B cell (primary cell): ENCODE measurements at regions of chr15 and their contacts with region 1.

Region 1: DNA sequence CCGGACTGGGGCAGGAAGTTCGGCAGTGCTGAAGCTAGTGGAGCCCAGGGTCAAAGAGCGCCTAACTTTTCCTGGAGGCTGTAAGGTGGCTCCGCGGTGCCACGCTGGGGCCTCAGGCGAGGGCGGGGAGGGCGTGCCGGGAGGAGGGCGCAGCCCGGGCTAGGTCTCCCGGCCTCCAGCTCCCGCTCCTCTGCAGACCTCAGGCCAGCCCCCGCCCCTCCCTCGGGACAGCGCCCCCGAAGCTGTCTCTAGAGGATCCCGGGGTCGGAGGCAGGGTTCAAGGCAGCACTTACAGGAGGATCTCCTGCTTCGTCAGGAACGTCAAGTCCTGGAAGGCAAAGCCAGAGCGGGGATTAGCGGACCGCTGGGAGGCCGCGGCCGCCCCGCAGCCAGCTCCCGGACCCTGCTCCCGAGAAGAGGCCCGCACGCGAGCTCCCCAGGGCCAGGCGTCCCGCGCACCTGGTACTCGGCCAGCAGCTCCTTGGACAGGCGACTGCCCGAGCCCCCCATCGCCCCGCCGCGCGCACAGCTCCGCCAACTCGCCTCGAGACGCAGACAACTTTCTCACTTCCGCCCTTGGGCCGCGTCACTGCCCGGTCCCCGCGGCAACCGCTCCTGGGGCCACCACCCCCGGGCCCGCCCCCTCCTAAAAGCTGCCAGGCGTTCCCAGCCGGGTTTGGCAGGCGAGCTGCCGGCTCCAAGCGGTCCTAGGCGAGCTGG is at the start of gene CIB1:
- DNase-seq: no peak
- ATAC-seq: peak; percentile 87
- H3K4me3 ChIP-seq: peak within 1 kb of the TSS; percentile 85 to 99 (median 92)
- H3K4me3 Mint-ChIP-seq: peak within 1 kb of the TSS; percentile 97
- H3K27ac ChIP-seq: peak within 1 kb of the TSS; percentile 88 to 99
- H3K27ac Mint-ChIP-seq: peak within 1 kb of the TSS; percentile 97
- H3K4me1 ChIP-seq: peaks cover 40 to 50% of the 10 kb centered on the region in 2 donors
- H3K4me1 Mint-ChIP-seq: peaks cover 52% of the 10 kb centered on the region
- H3K27me3 ChIP-seq: no peaks in the 10 kb centered on the region
- H3K27me3 Mint-ChIP-seq: no peaks in the 10 kb centered on the region
- CTCF ChIP-seq: no peak
- total RNA-seq, gene CIB1: 139 and 153 TPM in 2 replicates

Region 2: DNA sequence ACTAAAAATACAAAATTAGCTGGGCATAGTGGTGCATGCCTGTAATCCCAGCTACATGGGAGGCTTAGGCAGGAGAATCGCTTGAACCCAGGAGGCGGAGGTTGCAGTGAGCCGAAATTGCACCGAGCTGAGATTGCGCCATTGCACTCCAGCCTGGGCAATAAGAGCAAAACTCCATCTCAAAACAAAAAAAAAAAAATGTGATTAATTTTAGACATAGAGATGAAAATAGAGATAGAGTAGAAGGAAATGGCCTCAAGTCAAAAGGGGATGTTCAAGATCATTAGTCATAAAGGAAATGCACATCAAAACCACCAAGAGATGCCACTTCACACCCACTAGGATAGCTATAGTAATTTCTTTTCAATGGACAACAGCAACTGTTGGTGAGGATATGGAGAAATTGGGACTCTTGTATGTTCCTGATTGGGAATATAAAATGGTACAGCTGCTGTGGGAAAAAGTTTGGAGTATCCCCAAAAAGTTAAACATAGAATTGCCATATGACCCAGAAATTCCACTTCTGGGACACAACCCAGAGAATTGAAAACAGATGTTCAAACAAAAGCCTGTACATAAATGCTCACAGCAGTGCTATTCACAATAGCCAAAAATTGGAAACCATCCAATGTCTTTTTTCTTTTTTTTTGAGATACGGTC is 1089.9 kb before region 1 on chr15:
- CTCF ChIA-PET with region 1: no interaction called
- POLR2A ChIA-PET with region 1: no interaction called
- intact Hi-C with region 1: no loop called
- DNase-seq: no peak
- ATAC-seq: no peak
- H3K4me3 ChIP-seq: no peak overlapping the region
- H3K4me3 Mint-ChIP-seq: no peak overlapping the region
- H3K27ac ChIP-seq: no peak overlapping the region
- H3K27ac Mint-ChIP-seq: no peak overlapping the region
- H3K4me1 ChIP-seq: no peaks in the 10 kb centered on the region
- H3K4me1 Mint-ChIP-seq: peaks cover 4% of the 10 kb centered on the region
- H3K27me3 ChIP-seq: no peaks in the 10 kb centered on the region
- H3K27me3 Mint-ChIP-seq: no peaks in the 10 kb centered on the region
- CTCF ChIP-seq: no peak

Region 3: GRCh38 chr15:90101969-90102890 is 131.3 kb before region 1 on chr15 and contains the start of gene IDH2:
- CTCF ChIA-PET with region 1: interaction called, 3 read pairs
- POLR2A ChIA-PET with region 1: no interaction called
- intact Hi-C with region 1: loop called (anchors 5 kb)
- DNase-seq: peak; percentile 84
- ATAC-seq: peak; percentile 88
- H3K4me3 ChIP-seq: peak within 1 kb of the TSS; percentile 39 to 76 (median 73)
- H3K4me3 Mint-ChIP-seq: peak within 1 kb of the TSS; percentile 90
- H3K27ac ChIP-seq: peak within 1 kb of the TSS; percentile 53 to 81
- H3K27ac Mint-ChIP-seq: peak within 1 kb of the TSS; percentile 97
- H3K4me1 ChIP-seq: peaks cover 43 to 47% of the 10 kb centered on the region in 2 donors
- H3K4me1 Mint-ChIP-seq: peaks cover 45% of the 10 kb centered on the region
- H3K27me3 ChIP-seq: peaks cover 0 to 5% (median 1%) of the 10 kb centered on the region in 4 experiments
- H3K27me3 Mint-ChIP-seq: peaks cover 6% of the 10 kb centered on the region
- CTCF ChIP-seq: no peak
- total RNA-seq, gene IDH2: 30.7 and 33.3 TPM in 2 replicates

Region 4: DNA sequence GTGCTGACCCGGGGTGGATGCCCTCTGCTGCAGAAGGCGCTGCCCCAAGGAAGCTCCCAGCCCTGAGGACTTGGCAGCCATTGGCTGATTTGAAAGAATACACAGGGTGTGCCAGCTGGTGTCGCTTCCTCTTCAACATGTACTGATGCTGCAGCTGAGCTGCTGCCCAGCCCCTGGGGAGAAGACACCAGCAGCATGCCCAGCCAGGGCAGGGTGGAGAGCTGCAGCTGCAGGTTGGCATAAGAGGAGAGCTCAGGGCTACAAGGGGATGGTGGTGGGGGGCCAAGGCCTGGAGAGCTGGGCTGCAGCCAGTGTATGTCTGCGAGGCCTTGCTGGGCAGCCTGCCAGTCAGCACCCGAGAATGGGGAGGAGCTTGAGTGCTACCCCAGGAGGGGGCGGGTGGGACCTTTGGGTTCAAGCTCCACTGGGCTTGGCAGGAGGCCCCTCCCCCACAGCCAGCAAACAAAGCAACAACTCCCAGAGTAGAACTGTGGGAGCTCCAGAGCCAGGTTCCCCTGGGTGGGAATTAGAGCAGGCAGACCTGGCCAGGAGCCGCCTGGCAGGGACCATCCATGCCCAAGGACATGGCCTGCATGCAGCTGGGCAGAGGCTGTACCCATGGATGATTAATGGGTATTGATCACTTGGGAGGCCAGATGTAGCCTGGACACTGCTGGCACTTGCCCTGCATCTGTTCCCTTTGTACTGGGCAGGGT is 41.6 kb before region 1 on chr15:
- CTCF ChIA-PET with region 1: interaction called, 44 read pairs
- POLR2A ChIA-PET with region 1: interaction called, 49 read pairs
- intact Hi-C with region 1: loop called (anchors 1 kb)
- DNase-seq: peak; percentile 90
- ATAC-seq: peak; percentile 70
- H3K4me3 ChIP-seq: peak overlapping the region; percentile 45 to 58 (median 53)
- H3K4me3 Mint-ChIP-seq: peak overlapping the region; percentile 87
- H3K27ac ChIP-seq: peak overlapping the region; percentile 88 to 91
- H3K27ac Mint-ChIP-seq: peak overlapping the region; percentile 97
- H3K4me1 ChIP-seq: peaks cover 81 to 96% of the 10 kb centered on the region in 2 donors
- H3K4me1 Mint-ChIP-seq: peaks cover 82% of the 10 kb centered on the region
- H3K27me3 ChIP-seq: no peaks in the 10 kb centered on the region
- H3K27me3 Mint-ChIP-seq: no peaks in the 10 kb centered on the region
- CTCF ChIP-seq: no peak

Region 5: DNA sequence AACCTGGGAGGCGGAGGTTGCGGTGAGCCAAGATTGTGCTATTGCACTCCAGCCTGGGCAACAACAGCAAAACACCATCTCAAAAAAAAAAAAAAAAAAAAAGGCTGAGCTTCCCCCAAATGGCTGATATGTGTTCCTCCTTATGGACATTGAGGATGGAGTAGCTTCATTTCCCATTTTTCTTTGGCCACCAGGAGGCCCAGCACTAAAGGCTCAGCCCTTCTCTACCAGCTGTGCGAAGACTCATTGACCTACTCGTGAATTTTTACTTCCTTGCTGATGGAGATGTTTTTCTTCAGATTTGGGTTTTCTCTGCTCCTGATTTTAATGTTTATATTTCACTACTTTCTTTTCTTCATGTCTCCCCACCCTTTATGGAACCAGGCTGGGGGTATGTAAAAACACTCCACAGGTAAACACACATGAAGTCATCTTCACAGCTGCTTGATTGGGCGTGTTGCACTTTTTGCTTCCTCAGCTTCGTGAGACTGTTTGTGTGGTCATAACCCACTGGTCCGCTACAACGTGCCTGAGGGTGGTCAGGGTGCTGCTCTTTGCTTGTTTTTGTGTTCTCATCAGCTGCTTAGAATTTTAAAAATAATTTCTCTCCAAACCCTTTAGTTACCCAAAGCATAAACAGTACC is 18.9 kb before region 1 on chr15:
- CTCF ChIA-PET with region 1: interaction called, 102 read pairs
- POLR2A ChIA-PET with region 1: interaction called, 56 read pairs
- intact Hi-C with region 1: loop called (anchors 1 kb)
- DNase-seq: peak; percentile 69
- ATAC-seq: peak; percentile 64
- H3K4me3 ChIP-seq: peak overlapping the region in 2 of 5 experiments; percentile 9 to 53
- H3K4me3 Mint-ChIP-seq: peak overlapping the region; percentile 70
- H3K27ac ChIP-seq: peak overlapping the region; percentile 80 to 86
- H3K27ac Mint-ChIP-seq: peak overlapping the region; percentile 90
- H3K4me1 ChIP-seq: peaks cover 99 to 100% of the 10 kb centered on the region in 2 donors
- H3K4me1 Mint-ChIP-seq: peaks cover 94% of the 10 kb centered on the region
- H3K27me3 ChIP-seq: no peaks in the 10 kb centered on the region
- H3K27me3 Mint-ChIP-seq: no peaks in the 10 kb centered on the region
- CTCF ChIP-seq: peak; percentile 28

Region 6: DNA sequence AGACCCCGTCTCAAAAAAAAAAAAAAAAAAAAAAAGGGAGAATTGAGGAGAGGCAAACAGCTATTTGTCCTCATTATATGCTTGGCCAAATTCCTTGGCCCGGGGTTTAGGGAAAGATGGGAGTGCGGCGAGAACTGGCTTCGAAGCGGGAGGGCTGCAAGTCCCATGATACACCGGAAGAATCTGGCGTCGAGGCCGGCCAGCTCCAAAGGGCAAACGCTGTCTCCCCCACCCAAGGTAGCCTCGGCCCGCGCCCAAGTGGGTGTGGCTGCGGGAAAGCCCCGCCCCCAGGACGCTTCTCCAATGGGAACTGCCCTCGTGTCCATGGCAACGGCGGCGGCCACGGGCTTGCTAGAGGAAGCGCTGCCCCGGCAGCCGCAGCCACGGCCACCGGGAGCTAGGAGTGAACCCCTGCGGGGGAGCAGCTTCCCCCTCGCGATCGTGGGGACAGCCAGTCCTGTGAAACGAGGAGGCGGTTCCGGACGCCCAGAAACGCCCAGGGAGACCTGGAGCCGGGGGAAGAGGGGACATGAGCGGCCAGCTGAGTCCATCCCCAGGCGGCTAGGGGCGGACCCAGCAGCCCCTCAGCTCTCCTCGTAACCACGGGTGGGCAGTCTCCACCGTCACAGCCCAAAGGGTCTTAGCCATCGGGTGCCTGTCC is 15.8 kb after region 1 on chr15 and contains the start of gene TTLL13:
- CTCF ChIA-PET with region 1: interaction called, 9 read pairs
- POLR2A ChIA-PET with region 1: interaction called, 5 read pairs
- intact Hi-C with region 1: loop called (anchors 2 kb)
- DNase-seq: peak; percentile 71
- ATAC-seq: peak; percentile 79
- H3K4me3 ChIP-seq: peak within 1 kb of the TSS in 4 of 5 experiments; percentile 52 to 64 (median 56)
- H3K4me3 Mint-ChIP-seq: peak within 1 kb of the TSS; percentile 74
- H3K27ac ChIP-seq: peak within 1 kb of the TSS in 1 of 2 donors; percentile 39
- H3K27ac Mint-ChIP-seq: peak within 1 kb of the TSS; percentile 3
- H3K4me1 ChIP-seq: peaks cover 0 to 16% of the 10 kb centered on the region in 2 donors
- H3K4me1 Mint-ChIP-seq: peaks cover 16% of the 10 kb centered on the region
- H3K27me3 ChIP-seq: no peaks in the 10 kb centered on the region
- H3K27me3 Mint-ChIP-seq: no peaks in the 10 kb centered on the region
- CTCF ChIP-seq: no peak
- total RNA-seq, gene TTLL13: 0.22 and 0.42 TPM in 2 replicates

Region 7: GRCh38 chr15:90286678-90287077 is 53.1 kb after region 1 on chr15:
- CTCF ChIA-PET with region 1: interaction called, 5 read pairs
- POLR2A ChIA-PET with region 1: no interaction called
- intact Hi-C with region 1: loop called (anchors 5 kb)
- DNase-seq: peak; percentile 67
- ATAC-seq: peak; percentile 69
- H3K4me3 ChIP-seq: no peak overlapping the region
- H3K4me3 Mint-ChIP-seq: no peak overlapping the region
- H3K27ac ChIP-seq: no peak overlapping the region
- H3K27ac Mint-ChIP-seq: no peak overlapping the region
- H3K4me1 ChIP-seq: no peaks in the 10 kb centered on the region
- H3K4me1 Mint-ChIP-seq: peaks cover 4% of the 10 kb centered on the region
- H3K27me3 ChIP-seq: no peaks in the 10 kb centered on the region
- H3K27me3 Mint-ChIP-seq: no peaks in the 10 kb centered on the region
- CTCF ChIP-seq: peak; percentile 78

Region 8: DNA sequence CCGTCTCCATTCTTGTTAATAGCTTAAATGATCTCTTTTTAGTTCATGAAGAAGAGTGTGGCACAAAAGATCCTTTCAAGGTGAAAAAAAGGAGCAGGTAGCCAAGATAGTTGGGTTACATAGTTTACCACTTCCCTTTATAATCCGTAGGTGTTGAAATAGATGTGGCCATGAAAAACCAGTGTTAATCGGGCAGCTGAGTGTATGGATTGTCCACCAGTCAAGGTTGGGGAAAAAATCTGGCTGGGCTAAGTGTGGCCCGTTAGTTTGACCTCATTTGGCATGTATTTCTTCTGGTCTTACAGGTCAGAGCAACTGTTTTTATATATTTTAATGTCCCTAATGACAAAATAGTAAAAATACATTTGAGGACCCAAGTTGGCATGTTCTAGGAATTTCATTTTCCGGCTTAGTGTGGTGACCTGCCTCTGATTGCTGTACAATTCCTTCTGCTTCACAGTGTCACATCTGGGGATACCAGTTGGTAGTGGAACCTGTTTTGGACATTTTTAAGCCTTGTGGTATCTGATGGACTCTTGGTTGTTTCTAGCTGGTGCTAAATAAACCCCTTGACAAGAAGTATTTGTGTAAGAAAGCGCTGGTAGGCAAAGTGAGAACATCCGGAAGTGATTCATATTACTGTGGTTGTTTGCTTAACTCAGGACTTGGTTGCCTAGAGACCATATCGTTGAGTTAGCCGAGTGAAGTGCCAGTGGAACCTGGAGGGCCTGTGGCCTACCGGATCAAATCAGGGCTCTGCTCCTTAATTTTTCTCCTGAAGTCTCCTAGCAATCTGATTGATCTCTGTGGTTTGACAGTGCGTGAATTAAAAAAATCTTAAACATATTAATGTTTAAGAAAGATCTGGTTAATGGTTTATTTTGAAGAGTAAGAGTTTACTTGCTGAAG is 167.1 kb after region 1 on chr15:
- CTCF ChIA-PET with region 1: no interaction called
- POLR2A ChIA-PET with region 1: no interaction called
- intact Hi-C with region 1: loop called (anchors 5 kb)
- DNase-seq: peak; percentile 90
- ATAC-seq: peak; percentile 96
- H3K4me3 ChIP-seq: peak overlapping the region in 3 of 5 experiments; percentile 7 to 54 (median 29)
- H3K4me3 Mint-ChIP-seq: peak overlapping the region; percentile 78
- H3K27ac ChIP-seq: peak overlapping the region; percentile 92 to 95
- H3K27ac Mint-ChIP-seq: peak overlapping the region; percentile 96
- H3K4me1 ChIP-seq: peaks cover 31 to 36% of the 10 kb centered on the region in 2 donors
- H3K4me1 Mint-ChIP-seq: peaks cover 62% of the 10 kb centered on the region
- H3K27me3 ChIP-seq: no peaks in the 10 kb centered on the region
- H3K27me3 Mint-ChIP-seq: no peaks in the 10 kb centered on the region
- CTCF ChIP-seq: no peak